SK-N-SH (cell line): ENCODE measurements at regions of chr1 and their contacts with region 1.

Region 1: GRCh38 chr1:25695090-25695770 is 78.6 kb downstream of the MAN1C1 start:
- DNase-seq: no peak
- H3K4me3 ChIP-seq: no peak overlapping the region
- H3K27ac ChIP-seq: no peak overlapping the region
- H3K4me1 ChIP-seq: peaks cover 8 to 19% of the 10 kb centered on the region in 2 experiments; a peak in 3 of 4 replicates
- H3K27me3 ChIP-seq: no peaks in the 10 kb centered on the region; the same call in 1 of the 2 replicates
- CTCF ChIP-seq: peak; percentile 32; the same call in 1 of the 2 replicates
- EP300 ChIP-seq: no peak
- RAD21 ChIP-seq: peak; percentile 32; the same call in 1 of the 2 replicates

Region 2: DNA sequence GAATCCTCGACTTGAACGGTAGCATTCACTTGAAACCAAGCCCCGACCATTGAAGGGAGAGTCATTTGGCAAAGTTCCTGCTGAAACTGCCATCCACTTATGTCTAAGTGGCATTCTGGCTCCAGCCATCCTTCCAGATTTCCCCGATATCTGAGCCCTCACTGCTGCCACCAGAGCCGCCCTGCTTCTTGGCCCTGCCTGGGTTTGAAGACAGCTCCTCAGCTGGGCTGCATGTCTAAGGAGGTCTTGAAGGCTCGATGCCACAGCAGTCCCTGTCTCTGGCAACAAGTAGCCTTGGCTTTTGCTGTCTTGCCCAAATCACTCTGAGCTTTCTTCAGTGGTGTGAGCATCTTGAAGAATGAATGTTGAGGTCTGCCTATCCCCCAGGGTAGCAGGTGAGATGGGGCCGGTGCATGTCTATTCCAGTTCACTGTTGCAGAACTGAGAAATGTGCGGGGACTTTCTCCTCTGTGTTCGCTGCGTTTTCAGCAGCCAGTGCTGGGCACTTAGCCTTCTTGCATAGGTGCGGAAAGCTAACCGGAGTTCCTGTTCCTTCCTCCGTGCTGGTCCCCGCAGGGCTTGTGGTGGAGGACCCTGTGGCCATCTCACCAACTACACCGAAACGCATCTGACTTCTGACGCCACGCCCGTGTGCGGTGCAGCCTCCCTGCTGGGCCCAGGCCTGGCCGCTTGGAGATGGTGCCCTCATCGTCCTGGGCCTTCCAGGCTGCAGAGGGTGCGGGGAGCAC is 49.4 kb before region 1 on chr1:
- CTCF ChIA-PET with region 1: no interaction called
- POLR2A ChIA-PET with region 1: no interaction called
- DNase-seq: no peak
- H3K4me3 ChIP-seq: no peak overlapping the region
- H3K27ac ChIP-seq: no peak overlapping the region
- H3K4me1 ChIP-seq: no peaks in the 10 kb centered on the region; a peak in 1 of 4 replicates
- H3K27me3 ChIP-seq: peaks cover 20% of the 10 kb centered on the region; the same call in 1 of the 2 replicates
- CTCF ChIP-seq: no peak
- EP300 ChIP-seq: no peak
- RAD21 ChIP-seq: no peak

Region 3: GRCh38 chr1:25683701-25684100 is 11.5 kb before region 1 on chr1:
- CTCF ChIA-PET with region 1: interaction called, 16 read pairs
- POLR2A ChIA-PET with region 1: no interaction called
- DNase-seq: no peak
- H3K4me3 ChIP-seq: no peak overlapping the region
- H3K27ac ChIP-seq: no peak overlapping the region
- H3K4me1 ChIP-seq: peaks cover 6 to 7% of the 10 kb centered on the region in 2 experiments; a peak in 3 of 4 replicates
- H3K27me3 ChIP-seq: peaks cover 7% of the 10 kb centered on the region; the same call in 1 of the 2 replicates
- CTCF ChIP-seq: no peak
- EP300 ChIP-seq: no peak
- RAD21 ChIP-seq: no peak

Region 4: DNA sequence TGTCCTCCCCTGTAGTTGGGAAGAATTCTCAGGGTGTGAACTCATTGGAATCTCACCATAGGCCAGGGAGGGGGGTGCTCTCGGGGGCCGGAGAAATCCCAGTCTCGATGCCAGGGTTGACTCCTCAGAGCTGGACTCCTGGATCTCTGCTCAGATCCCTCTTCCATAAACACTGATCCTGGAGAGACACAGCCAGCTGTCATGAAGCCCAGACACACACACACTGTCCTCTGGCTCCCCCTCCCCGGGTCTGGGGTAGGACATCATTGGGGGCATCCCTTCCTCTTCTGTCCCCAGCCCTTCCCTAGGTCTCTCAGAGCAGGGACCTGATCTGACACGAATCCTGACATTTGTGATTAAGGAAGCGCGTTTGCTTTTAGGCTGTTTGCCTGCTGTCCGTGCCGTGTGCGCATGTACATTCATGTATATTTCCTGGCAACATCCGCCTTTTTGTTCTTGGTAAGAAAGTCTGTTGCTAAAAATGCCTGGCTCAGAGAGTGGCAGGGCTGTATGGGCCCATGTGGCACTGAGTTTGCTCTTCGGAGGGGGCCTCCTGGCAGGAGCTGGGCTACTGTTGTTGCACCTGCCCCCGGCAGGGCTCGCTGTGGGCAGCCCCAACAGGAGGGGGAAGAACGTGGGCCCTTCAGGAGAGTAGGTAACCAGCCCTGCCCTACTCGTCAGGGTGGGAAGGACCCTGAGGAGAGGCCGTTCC is 59.4 kb after region 1 on chr1:
- CTCF ChIA-PET with region 1: no interaction called
- POLR2A ChIA-PET with region 1: no interaction called
- DNase-seq: no peak
- H3K4me3 ChIP-seq: no peak overlapping the region
- H3K27ac ChIP-seq: no peak overlapping the region
- H3K4me1 ChIP-seq: peaks cover 0 to 15% of the 10 kb centered on the region in 2 experiments; a peak in 1 of 4 replicates
- H3K27me3 ChIP-seq: peaks cover 10% of the 10 kb centered on the region
- CTCF ChIP-seq: no peak
- EP300 ChIP-seq: no peak
- RAD21 ChIP-seq: no peak